ENCODE measurements at regions of chr1 and their contacts with region 1.

Region 1: DNA sequence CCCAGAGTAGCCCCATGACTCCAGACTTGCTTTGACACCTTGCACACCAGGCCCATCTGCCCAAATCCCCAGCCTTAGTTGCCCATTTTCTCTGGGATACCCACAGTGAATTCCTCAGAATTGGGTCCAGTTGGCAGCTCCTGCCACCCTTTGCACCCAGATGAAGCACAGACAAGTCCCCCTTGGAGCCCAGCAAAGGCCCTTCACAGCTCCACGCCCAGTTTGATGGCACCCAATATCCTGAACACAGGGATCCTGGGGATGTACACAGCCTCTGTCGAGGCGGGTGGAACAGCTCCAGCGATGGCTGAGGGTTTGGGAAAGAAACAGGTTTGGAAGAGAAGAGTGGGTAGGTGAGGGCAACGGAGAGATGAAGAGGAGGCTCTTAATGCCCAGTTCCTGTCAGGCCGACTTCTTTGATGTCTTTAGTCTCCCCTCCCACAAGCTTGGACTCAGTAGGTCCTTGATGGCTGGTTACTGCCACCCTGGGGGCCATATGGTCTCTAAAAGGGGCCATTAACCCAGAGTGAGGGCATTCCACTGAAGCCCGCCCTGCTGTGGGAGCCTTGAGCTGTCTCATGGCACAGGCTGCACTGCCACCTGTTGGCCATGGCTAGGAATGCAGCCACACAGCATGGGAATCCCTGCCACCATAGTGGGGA is 21.7 kb downstream of the TMEM53 start:
- DNase-seq: peak; percentile 67 to 97 (median 91)

Region 2: DNA sequence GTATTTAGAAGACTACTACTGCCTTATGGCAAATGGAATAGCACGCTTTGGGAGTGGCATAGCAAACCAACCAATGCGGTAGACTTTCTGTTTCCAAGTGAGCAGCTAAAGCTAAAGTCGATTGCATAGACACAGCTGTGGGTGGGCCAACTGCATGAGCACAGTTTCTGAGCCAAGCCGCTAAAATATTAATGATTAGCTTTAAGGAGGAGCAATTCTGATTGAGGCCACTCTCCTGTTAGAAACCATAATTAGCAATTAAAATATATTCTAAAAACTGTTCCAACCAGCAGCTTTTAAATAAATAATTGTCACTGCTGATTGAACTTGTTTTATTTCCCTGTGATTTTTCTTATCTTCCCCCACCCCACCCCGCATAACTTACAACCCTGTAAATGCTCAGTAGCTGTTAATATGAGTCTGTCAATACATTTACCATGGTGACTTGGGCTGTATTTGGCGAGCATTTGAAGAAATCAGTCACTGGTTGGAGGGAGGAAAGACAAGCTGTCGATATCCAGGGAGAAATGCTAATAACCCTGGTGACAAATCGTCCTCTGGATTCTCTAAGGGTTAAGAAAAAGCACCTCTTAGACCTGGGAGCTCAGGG is 215.4 kb before region 1 on chr1:
- intact Hi-C with region 1: no loop called
- DNase-seq: no peak

Region 3: GRCh38 chr1:44616991-44617702 is 35.4 kb before region 1 on chr1:
- intact Hi-C with region 1: loop called (anchors 5 kb)
- DNase-seq: peak in 2 of 42 donors; percentile 32 to 48

Region 4: GRCh38 chr1:44714944-44715571 is 62.5 kb after region 1 on chr1:
- intact Hi-C with region 1: no loop called
- DNase-seq: peak; percentile 33 to 90 (median 74)

Measured in head of caudate nucleus (tissue), 42 donors.